A673 (cell line): ENCODE measurements at regions of chr1 and their contacts with region 1.

Region 1: DNA sequence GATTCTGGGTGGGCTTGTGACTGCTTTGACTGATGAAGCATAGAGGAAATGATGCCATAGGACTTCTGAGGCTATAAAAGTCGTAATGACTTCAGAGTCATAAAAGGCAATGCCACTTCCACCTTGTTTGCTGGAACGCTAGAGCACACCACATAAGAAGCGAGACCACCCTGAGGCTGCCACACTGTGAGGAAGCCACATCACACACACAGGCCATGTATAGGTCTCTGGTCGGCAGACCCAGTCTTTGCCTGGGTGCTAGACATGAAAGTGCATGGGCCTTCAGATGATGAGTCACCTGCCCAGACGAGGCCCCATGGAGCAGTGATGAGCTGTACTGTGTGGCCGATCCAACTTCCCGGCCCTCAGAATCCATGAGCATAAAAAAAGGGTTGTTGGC is 14.2 kb upstream of the KANK4 start:
- DNase-seq: no peak
- H3K4me3 ChIP-seq: no peak overlapping the region
- H3K27ac ChIP-seq: no peak overlapping the region
- H3K4me1 ChIP-seq: no peaks in the 10 kb centered on the region
- H3K27me3 ChIP-seq: no peaks in the 10 kb centered on the region
- CTCF ChIP-seq: no peak

Region 2: GRCh38 chr1:62198781-62199125 is 134.7 kb before region 1 on chr1:
- CTCF ChIA-PET with region 1: no interaction called
- POLR2A ChIA-PET with region 1: interaction called, 28 read pairs
- intact Hi-C with region 1: no loop called
- DNase-seq: no peak
- H3K4me3 ChIP-seq: no peak overlapping the region
- H3K27ac ChIP-seq: no peak overlapping the region
- H3K4me1 ChIP-seq: no peaks in the 10 kb centered on the region
- H3K27me3 ChIP-seq: no peaks in the 10 kb centered on the region
- CTCF ChIP-seq: no peak

Region 3: GRCh38 chr1:62452951-62453350 is 119.5 kb after region 1 on chr1:
- CTCF ChIA-PET with region 1: no interaction called
- POLR2A ChIA-PET with region 1: no interaction called
- intact Hi-C with region 1: no loop called
- DNase-seq: no peak
- H3K4me3 ChIP-seq: no peak overlapping the region
- H3K27ac ChIP-seq: no peak overlapping the region
- H3K4me1 ChIP-seq: no peaks in the 10 kb centered on the region
- H3K27me3 ChIP-seq: no peaks in the 10 kb centered on the region
- CTCF ChIP-seq: no peak